ENCODE measurements at regions of chr21 and their contacts with region 1.

Region 1: DNA sequence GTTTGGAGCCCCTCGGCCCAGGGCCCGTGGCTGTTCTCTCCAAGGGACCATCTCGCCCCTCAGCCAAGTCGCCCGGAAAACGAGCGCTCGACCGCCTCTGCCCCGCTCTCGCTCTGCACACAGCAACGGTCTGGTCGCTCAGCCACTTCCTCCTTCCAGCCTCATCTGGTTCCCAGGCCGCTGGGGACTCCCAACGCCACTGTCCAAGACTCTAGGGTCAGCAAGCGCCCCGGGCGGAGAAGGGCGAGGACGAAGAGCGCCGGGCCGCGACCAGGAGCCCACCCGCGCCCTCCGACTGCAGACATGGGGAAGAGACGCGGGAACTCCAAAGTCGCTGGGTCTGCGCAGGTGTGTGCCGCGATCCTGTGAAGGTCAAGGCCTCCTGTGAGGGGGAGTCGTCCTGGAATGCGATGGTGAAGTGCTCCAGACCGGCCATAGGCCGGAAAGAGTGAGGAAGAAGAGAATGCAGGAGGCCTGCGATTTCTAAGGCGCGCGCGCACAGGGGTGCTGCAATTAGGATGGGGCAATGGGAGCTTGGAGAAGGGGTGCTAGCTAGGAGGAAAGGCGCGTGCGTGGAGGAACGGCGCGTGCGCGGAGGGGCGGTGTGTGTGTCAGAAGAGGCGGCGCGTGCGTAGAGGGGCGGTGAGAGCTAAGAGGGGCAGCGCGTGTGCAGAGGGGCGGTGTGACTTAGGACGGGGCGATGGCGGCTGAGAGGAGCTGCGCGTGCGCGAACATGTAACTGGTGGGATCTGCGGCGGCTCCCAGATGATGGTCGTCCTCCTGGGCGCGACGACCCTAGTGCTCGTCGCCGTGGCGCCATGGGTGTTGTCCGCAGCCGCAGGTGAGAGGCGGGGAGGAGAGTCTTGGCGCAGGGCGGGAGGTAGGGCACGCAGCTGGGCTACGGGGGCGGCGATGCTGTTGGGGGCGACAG is at the start of gene IFNAR1:
- DNase-seq: peak; percentile 92 to 100 (median 98)
- ATAC-seq: peak; percentile 83 to 84
- H3K4me3 Mint-ChIP-seq: no peak within 1 kb of the TSS
- H3K27ac Mint-ChIP-seq: no peak within 1 kb of the TSS
- H3K4me1 Mint-ChIP-seq: peaks cover 9 to 32% (median 27%) of the 10 kb centered on the region in 4 donors
- H3K27me3 Mint-ChIP-seq: no peaks in the 10 kb centered on the region
- polyA plus RNA-seq, gene IFNAR1: 48.7 to 69.0 (median 51.8) TPM

Region 2: DNA sequence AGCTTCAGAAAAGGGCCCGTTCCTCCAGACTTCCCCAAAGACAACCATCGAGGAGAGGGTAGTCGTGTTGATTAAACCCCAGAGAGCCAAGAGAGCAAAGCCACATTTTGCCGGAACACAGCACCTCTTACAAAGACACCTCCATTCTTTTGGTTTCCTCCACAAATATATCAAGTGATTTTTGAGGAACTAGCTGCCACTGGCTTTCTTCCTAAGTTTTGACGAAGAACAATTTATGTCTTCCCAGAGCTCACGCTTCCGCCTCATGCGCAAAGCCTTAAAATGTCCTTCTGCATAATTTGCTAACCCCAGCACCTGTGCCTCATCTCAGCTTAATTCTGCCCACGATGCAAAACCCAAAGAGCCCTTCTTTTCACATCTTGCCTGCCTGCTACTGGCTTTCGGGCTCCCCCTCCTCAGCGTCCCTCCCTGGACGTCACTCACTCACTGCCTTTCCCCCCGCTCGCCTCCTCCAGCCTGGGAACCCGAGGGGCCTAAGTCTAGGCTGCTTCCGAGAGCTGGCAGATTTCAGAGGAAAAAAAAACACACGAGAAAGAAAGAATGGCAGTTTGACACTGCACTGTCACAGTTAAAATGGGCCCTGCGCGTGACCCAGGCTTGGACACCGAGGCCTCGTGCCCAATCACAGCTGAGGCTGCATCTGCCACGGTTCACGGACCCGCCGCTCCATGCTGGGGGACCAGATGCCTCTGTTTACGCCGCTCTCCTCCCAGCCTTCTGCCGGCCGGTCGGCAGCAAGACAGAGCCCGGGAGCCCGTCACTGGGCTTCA is 172.4 kb before region 1 on chr21:
- POLR2A ChIA-PET with region 1: no interaction called
- DNase-seq: no peak
- ATAC-seq: no peak
- H3K4me3 Mint-ChIP-seq: peak overlapping the region in 8 of 10 donors; percentile 9 to 42 (median 34)
- H3K27ac Mint-ChIP-seq: peak overlapping the region in 1 of 10 donors; percentile 63
- H3K4me1 Mint-ChIP-seq: peaks cover 3 to 13% (median 7%) of the 10 kb centered on the region in 4 donors
- H3K27me3 Mint-ChIP-seq: peaks cover 7 to 37% (median 25%) of the 10 kb centered on the region in 5 donors

Region 3: DNA sequence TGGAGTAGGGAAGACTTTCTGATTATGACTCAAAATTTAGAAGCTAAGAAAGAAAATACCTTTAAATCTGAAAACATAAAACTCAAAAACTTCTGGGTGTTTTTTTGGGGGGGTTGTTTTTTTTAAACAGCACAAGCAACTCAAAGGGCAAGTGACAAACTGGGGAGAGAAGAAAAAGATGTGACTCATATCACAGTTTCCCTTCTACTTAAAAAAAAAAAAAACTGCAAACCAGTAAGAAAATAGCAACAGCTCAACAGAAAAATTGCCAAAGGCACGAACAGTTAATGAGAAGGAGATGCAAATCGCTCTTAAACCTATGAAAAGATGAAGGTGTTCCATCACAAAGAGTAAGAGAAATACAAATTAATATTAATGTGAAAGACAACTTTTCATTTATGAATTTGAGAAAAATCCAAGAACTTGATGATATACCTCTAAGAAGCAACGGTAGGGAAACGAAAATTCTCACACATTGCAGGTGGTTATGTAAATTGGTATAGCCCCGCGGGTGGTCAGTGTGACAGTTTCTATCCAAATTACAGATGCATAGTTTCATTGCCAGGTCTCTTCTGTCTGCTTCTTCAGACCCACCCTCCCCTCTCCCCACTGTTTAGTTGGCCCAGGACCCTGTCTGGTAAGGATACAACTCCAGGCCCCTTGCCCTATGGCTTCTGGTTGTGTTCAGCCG is 85.8 kb before region 1 on chr21:
- POLR2A ChIA-PET with region 1: interaction called, 11 read pairs
- DNase-seq: peak in 1 of 10 donors; percentile 25
- ATAC-seq: peak; percentile 42 to 63
- H3K4me3 Mint-ChIP-seq: peak overlapping the region; percentile 19 to 84 (median 67)
- H3K27ac Mint-ChIP-seq: peak overlapping the region; percentile 78 to 98 (median 90)
- H3K4me1 Mint-ChIP-seq: peaks cover 46 to 91% (median 84%) of the 10 kb centered on the region in 4 donors
- H3K27me3 Mint-ChIP-seq: no peaks in the 10 kb centered on the region

Region 4: DNA sequence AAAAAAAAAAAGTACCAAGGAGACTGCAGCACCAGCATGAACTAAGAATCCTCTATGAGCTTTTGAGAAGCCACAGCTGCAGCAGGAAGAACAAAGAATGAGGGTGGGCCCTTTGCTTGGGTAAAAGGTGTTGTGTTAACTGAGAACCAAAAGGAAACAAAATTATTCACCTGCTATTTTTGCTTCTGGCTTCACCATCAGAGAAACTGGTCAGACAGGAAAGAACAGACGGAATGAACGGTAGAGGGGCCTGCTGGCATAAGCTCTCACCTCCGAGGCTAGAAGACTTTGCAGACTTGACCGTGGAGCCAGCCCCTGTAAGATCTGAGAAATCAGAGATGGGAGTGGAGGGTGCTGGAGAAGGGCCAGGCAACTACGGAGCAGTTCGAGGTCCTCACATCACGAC is 30.7 kb before region 1 on chr21:
- POLR2A ChIA-PET with region 1: interaction called, 29 read pairs
- DNase-seq: peak in 6 of 10 donors; percentile 31 to 69 (median 56)
- ATAC-seq: peak; percentile 88 to 94
- H3K4me3 Mint-ChIP-seq: peak overlapping the region; percentile 58 to 87 (median 74)
- H3K27ac Mint-ChIP-seq: peak overlapping the region; percentile 65 to 98 (median 92)
- H3K4me1 Mint-ChIP-seq: peaks cover 13 to 43% (median 40%) of the 10 kb centered on the region in 4 donors
- H3K27me3 Mint-ChIP-seq: no peaks in the 10 kb centered on the region

Region 5: DNA sequence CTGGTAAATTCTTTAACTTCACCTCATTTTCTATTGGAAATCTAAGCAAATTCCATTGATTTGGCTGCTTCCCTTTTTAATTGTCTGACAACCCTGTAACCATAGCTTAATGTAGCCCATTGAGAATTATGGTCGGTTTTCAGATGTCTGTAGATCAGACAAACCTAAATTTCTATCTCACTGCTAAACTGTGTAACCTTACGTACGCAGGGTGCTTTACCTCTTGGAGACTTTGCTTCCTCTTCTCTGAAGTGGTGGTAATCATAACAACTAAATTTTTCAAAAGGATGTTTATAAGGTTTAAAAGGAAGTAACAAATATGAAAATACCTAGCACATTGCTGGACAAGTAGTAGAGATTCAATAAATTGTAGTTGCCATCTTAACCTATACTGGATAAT is 26.1 kb after region 1 on chr21:
- POLR2A ChIA-PET with region 1: interaction called, 10 read pairs
- DNase-seq: peak in 4 of 10 donors; percentile 39 to 72 (median 54)
- ATAC-seq: peak; percentile 89 to 99
- H3K4me3 Mint-ChIP-seq: peak overlapping the region in 3 of 10 donors; percentile 7 to 36 (median 15)
- H3K27ac Mint-ChIP-seq: peak overlapping the region; percentile 81 to 94 (median 86)
- H3K4me1 Mint-ChIP-seq: peaks cover 8 to 29% (median 19%) of the 10 kb centered on the region in 4 donors
- H3K27me3 Mint-ChIP-seq: no peaks in the 10 kb centered on the region

Region 6: GRCh38 chr21:33455686-33456446 is 131.3 kb after region 1 on chr21:
- POLR2A ChIA-PET with region 1: no interaction called
- DNase-seq: no peak
- ATAC-seq: no peak
- H3K4me3 Mint-ChIP-seq: no peak overlapping the region
- H3K27ac Mint-ChIP-seq: peak overlapping the region in 1 of 10 donors; percentile 29
- H3K4me1 Mint-ChIP-seq: peaks cover 0 to 2% (median 0%) of the 10 kb centered on the region in 4 donors
- H3K27me3 Mint-ChIP-seq: no peaks in the 10 kb centered on the region

Region 7: GRCh38 chr21:33479679-33480480 is 155.3 kb after region 1 on chr21 and contains the start of gene TMEM50B:
- POLR2A ChIA-PET with region 1: interaction called, 24 read pairs
- DNase-seq: peak; percentile 89 to 98 (median 94)
- ATAC-seq: peak; percentile 87 to 88
- H3K4me3 Mint-ChIP-seq: peak within 1 kb of the TSS; percentile 81 to 97 (median 94)
- H3K27ac Mint-ChIP-seq: peak within 1 kb of the TSS; percentile 65 to 98 (median 96)
- H3K4me1 Mint-ChIP-seq: peaks cover 11 to 32% (median 24%) of the 10 kb centered on the region in 4 donors
- H3K27me3 Mint-ChIP-seq: no peaks in the 10 kb centered on the region
- polyA plus RNA-seq, gene TMEM50B: 42.3 to 47.9 (median 45.4) TPM

Region 8: DNA sequence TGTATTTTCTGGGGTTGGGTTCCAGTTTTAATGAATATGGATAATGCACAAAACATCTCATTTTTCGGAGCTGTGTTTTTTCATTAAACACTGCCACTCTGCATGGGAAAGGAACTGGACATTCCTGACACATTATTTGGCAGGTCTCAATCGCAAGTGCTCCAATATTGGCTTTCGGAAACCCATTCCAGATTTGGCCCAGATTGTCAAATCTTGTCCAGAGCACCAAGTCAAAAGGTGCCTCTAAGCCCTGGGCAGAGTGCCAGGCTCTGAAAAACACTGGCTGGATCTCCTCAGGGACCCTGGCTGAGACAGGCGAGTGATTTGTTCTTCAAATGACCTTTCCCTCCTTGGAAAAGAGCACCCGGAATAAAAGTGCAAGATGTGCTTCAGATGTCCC is 680.4 kb after region 1 on chr21:
- POLR2A ChIA-PET with region 1: no interaction called
- DNase-seq: no peak
- ATAC-seq: no peak
- H3K4me3 Mint-ChIP-seq: no peak overlapping the region
- H3K27ac Mint-ChIP-seq: no peak overlapping the region
- H3K4me1 Mint-ChIP-seq: peaks cover 1 to 13% (median 11%) of the 10 kb centered on the region in 4 donors
- H3K27me3 Mint-ChIP-seq: peaks cover 0 to 1% (median 0%) of the 10 kb centered on the region in 5 donors